ENCODE measurements at regions of chr1 and their contacts with region 1.

Region 1: DNA sequence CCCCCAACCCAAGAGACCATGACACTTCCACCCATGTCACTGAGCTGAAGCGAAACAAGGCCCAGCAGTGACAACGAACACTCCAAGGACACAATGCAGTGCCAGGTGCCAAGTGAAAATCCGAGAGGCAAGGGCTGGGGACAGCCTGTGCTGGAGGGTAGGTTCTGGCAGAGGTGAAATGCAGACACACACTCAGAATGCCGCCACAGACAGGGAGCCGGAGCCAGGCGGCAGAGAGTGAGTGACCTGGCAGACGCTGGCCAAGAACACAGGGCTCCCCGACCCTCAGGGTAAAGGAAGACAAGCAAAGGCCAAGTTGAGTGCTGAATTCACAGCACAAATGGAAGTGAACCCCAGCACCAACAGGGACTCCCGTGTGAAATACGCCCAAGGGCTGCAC is 78.9 kb downstream of the CD46 start:
- DNase-seq: no peak

Region 2: DNA sequence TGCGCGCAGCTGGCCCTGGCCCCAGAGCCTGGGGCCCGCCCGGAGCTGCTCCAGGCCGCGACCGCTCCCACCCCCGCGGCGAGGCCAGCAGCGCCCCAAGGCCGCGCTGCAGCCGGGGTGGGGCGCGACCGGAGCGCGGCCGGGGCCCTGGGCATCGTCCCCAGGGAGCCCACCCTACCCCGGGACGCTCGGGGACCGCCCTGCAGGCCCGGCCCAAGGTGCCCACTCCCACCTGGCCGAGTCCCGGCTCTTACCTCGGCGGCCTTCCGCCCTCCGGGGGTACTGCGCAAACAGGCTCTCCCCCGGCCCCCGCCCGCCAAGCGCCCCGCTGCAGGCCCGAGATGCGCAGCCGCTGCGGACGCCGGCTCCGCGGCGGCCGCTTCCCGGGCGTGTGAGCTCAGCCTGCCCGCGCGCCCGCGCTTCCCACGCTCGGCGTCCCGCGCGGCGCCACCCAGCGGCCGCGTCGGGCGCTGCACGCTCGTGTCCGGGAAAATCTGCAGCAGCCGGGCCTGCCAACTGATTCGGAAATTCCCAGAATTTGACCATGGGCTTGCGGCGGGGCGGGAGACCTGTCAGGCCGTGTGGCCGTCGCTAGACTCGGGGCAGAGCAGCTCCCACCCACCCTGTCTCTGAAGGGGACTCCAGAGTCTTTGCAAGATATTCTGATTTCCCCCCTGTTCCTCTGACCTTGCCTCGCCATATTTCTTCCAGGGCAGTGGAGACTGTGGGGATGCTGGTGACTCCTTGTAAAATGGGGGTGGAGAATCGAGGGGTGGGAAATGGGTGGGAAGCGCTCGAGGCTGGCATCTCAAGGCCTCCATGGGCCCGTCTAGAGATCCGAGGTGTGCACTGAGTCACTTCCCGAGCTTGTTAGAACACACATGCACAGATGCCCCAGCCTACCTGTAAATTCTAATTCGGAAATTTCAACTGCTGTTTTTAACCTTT is 38.2 kb after region 1 on chr1:
- CTCF ChIA-PET with region 1: interaction called, 10 read pairs
- POLR2A ChIA-PET with region 1: interaction called, 3 read pairs
- DNase-seq: peak; percentile 95